ENCODE measurements at regions of chr2 and their contacts with region 1.

Region 1: DNA sequence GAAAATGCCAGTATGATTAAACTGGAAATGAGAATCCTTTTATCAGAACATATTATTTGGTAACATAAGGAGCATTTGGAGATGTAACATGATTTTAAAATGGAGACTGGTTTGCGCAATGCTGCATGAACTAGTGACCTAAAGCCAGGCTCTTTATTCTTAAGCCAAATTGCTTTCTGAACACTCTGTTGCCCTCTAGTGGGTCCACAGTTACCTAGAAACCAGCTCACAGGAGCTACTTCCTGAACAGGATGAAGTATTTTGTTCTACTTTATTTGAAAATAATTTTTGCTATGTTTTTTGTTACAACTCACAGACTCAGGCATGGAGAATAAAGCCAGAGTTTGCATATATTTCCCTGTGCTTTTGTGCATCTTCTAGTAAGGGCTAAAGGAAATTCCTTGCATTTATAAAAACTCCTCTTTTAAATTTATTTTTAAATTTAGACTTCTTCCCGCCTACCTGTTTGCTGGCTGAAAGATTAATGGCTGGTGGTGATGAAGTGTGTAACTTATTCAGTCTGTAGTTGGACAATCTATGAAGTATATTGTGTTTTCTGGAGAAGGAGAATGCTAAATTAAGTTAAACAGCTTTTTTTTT is 146.7 kb downstream of the PARD3B start:
- DNase-seq: peak; percentile 57
- H3K4me3 ChIP-seq: no peak overlapping the region
- H3K27ac ChIP-seq: no peak overlapping the region
- H3K4me1 ChIP-seq: no peaks in the 10 kb centered on the region
- H3K27me3 ChIP-seq: no peaks in the 10 kb centered on the region
- CTCF ChIP-seq: peak; percentile 84 to 85

Region 2: DNA sequence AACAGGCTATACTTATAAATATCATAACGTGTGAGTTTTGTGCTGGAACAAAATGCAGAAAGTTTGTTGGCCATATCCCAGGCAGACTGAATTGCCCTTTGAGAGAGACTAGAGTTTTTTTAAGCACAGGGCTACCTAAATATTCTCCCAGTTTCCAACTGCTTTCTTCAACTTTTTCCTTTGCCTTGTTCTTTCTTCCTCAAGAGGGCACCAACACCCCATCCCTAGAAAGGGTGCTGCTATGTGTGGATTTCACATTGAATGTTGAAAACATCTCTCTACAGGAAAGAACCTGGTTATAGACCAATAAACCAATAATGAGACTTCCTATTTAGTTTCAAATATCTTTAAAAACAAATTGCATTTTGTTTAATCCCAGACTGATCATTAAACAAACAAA is 667.5 kb before region 1 on chr2:
- CTCF ChIA-PET with region 1: no interaction called
- dilution Hi-C with region 1: no loop called
- in situ Hi-C with region 1: no loop called
- intact Hi-C with region 1: loop called (anchors 5 kb)
- DNase-seq: peak; percentile 46
- H3K4me3 ChIP-seq: no peak overlapping the region
- H3K27ac ChIP-seq: no peak overlapping the region
- H3K4me1 ChIP-seq: peaks cover 15% of the 10 kb centered on the region
- H3K27me3 ChIP-seq: no peaks in the 10 kb centered on the region
- CTCF ChIP-seq: peak; percentile 64 to 86

Region 3: DNA sequence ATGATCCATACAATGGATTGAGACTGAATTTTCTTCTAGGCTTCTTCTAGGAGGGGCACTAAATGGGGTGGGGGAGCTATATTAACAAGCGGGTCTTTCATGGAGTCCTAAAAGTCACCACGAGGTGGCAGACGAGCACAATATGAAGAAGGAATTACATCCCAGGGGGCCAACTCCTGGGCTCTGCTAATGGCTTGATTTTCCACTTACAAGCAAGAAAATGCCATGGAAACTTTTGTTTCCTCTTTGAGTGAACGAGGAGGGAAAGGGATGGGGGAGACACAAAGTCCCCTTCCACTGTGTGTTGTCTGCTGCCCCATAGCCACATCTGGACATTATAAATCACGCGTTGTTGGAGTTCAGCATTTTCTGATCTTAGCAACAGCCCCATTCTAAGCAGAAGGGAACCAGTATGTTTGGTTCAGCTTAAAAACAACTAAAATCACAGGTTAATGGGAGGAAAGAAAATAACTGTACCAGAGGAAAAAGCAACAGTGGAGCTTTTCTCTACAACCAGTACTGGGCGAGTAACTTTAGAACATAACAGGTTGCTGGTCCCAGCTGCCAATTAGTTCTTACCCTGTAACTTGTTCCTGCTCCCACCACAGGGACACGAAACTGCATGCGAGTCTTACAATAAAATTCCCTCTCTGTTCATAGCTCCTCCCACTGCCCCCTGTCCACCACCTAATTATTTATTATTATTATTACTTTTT is 431.7 kb before region 1 on chr2:
- CTCF ChIA-PET with region 1: no interaction called
- dilution Hi-C with region 1: no loop called
- in situ Hi-C with region 1: no loop called
- intact Hi-C with region 1: loop called (anchors 2 kb)
- DNase-seq: peak; percentile 19
- H3K4me3 ChIP-seq: no peak overlapping the region
- H3K27ac ChIP-seq: no peak overlapping the region
- H3K4me1 ChIP-seq: peaks cover 4% of the 10 kb centered on the region
- H3K27me3 ChIP-seq: no peaks in the 10 kb centered on the region
- CTCF ChIP-seq: peak; percentile 65 to 76

Region 4: DNA sequence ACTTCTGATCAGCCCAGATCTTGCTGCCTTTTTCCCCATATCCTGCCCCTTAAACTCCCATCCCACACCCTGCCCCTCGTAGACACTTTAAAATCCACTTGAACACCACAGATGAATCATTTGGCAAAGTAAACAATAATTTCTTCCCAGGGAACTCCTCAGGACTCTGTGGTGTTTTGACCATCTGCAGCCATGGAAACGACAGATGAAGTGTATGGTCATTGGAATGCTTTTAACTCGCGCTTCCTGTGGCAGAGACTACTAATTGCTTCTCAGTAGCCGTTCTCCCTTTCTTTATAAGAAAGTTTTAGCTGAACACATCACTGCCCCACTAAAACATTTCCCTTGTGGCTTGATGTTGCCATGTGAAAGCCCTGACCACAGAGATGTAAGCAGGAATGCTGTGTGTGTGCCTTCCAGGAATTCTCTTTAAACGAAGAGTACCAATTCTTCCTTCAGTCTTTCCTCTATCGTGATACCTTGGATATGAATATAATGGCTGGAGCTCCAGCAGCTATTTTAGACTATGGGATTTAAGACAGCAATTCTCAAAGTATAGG is 239.5 kb before region 1 on chr2:
- CTCF ChIA-PET with region 1: no interaction called
- dilution Hi-C with region 1: no loop called
- in situ Hi-C with region 1: no loop called
- intact Hi-C with region 1: loop called (anchors 10 kb)
- DNase-seq: peak; percentile 92
- H3K4me3 ChIP-seq: no peak overlapping the region
- H3K27ac ChIP-seq: no peak overlapping the region
- H3K4me1 ChIP-seq: no peaks in the 10 kb centered on the region
- H3K27me3 ChIP-seq: no peaks in the 10 kb centered on the region
- CTCF ChIP-seq: no peak

Region 5: DNA sequence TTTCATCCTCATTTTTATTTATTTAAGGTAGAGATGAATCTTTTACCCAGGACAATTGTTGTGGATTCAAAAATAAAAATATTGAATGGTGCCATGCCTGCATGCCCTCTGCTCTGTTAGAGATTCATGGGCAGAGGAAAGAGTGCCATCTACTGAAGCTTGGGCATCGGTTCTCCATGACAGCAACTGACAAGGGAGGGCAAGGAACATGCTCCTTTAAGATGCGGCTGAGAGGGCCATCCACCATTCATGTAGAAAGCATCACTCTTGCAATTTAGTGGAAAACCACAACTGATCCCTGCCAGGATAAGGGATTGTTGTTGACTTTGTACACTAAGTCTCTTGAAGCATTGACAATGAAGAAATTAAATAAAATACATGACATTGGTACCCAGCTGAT is 66.8 kb before region 1 on chr2:
- CTCF ChIA-PET with region 1: no interaction called
- dilution Hi-C with region 1: no loop called
- in situ Hi-C with region 1: no loop called
- intact Hi-C with region 1: loop called (anchors 10 kb)
- DNase-seq: peak; percentile 16
- H3K4me3 ChIP-seq: no peak overlapping the region
- H3K27ac ChIP-seq: no peak overlapping the region
- H3K4me1 ChIP-seq: no peaks in the 10 kb centered on the region
- H3K27me3 ChIP-seq: no peaks in the 10 kb centered on the region
- CTCF ChIP-seq: peak in 1 of 2 donors; percentile 43